Dorsolateral prefrontal cortex (tissue), 120 donors: ENCODE measurements at regions of chr19 and their contacts with region 1.

Region 1: DNA sequence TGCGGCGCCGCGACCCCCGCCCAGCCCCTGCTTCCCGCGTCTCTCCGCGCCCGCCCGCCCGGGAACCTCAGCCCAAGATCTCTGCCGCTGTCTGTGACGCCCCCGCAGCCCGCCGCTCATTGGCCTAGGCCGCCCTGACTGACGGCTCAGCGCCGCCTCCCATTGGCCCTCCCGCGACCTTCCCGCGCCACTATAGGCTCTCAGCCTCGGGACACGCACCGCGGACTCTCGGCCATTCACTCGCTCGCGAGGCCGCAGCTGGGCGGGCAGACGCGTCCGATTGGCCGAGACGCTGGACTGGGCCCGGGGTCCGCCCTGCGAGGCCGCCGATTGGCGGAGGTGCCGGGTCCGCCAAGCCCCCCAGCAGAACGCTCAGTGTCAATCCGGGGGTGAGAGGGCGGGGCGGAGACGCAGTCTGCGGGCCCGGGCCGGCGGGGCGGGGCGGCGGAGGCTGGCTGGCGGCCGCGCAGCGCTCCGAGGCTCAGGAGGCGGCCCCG is at the start of gene PRKACA:
- DNase-seq: peak; percentile 98 to 100 (median 100)
- H3K4me3 ChIP-seq: peak within 1 kb of the TSS; percentile 65 to 94 (median 84)
- H3K27ac ChIP-seq: peak within 1 kb of the TSS; percentile 94 to 100 (median 99)
- H3K27me3 ChIP-seq: no peaks in the 10 kb centered on the region
- CTCF ChIP-seq: no peak
- total RNA-seq, gene PRKACA: 87.9 to 222 (median 163) TPM

Region 2: GRCh38 chr19:14081325-14082093 is 36.2 kb before region 1 on chr19:
- intact Hi-C with region 1: loop called (anchors 5 kb)
- DNase-seq: peak; percentile 97 to 99 (median 98)
- H3K4me3 ChIP-seq: peak overlapping the region; percentile 58 to 99 (median 85)
- H3K27ac ChIP-seq: peak overlapping the region; percentile 25 to 96 (median 87)
- H3K27me3 ChIP-seq: no peaks in the 10 kb centered on the region
- CTCF ChIP-seq: peak in 45 of 56 donors; percentile 7 to 66 (median 28)

Region 3: DNA sequence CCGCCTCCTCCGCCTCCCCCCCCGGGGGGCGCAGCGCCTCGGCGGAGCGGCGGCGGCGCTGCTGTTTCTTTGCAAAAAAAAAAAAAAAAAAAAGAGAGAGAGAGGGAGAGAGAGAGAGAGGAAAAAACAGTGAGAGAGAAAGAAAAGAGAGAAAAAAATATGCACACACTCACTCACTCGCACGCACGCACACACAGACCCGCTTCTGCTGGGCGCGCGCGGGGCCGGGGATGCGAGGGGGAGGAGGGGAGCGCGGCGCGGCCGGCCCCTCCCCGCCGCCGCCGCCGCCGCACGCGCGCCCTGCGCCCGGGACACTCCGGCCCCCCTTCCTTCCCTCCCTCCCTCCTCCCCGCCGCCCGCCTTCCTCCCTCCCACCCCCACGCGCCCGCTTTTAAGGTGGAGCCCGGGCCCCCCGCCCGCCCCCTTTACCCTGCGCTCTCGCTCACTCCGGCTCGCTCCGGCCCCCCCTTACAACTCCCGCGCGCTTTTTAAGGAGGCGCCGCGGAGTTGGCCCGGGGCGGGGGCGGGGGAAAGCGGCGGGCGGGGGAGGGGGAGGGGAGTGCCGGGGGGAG is 27.1 kb before region 1 on chr19 and contains the start of gene SAMD1:
- intact Hi-C with region 1: loop called (anchors 1 kb)
- DNase-seq: peak; percentile 50 to 88 (median 80)
- H3K4me3 ChIP-seq: peak within 1 kb of the TSS; percentile 50 to 88 (median 77)
- H3K27ac ChIP-seq: peak within 1 kb of the TSS; percentile 72 to 98 (median 93)
- H3K27me3 ChIP-seq: no peaks in the 10 kb centered on the region
- CTCF ChIP-seq: peak in 2 of 56 donors; percentile 2 to 4
- total RNA-seq, gene SAMD1: 30.2 to 108 (median 43.1) TPM